ENCODE measurements at regions of chr7 and their contacts with region 1.

Region 1: DNA sequence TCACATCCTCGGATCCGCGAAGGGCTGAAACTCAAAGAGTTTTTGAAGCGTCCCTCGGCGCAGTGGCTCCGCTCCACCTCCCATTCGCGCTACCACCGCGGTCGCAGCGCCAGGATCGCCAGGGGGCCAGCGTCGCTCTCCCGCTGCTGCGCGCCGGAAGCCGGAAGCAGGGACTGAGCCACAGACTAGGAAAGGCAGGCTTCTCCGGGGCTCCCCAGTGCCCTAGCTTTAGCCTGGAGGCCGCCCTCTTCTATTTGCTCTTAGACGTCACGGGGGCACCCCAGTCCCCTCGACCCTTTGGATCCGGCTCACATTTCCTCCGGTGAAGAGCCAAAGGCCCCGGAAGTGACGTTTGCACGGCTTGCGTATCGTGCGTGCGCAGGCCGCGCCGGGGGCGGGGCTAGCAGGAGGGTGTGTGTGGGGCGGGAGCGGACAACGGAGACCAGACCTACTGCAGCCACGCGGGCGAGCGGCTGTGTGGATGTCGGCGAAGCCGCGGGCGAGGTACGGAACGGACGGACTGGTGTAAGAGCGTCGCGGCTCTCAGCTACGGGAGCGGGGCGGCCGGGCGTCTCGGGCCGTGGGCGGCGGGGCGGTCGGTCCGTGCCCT is 25.5 kb downstream of the KCTD7 start:
- DNase-seq: peak; percentile 98
- H3K4me3 Mint-ChIP-seq: peak overlapping the region; percentile 94
- H3K27ac Mint-ChIP-seq: peak overlapping the region; percentile 96
- H3K4me1 Mint-ChIP-seq: peaks cover 23% of the 10 kb centered on the region
- H3K27me3 Mint-ChIP-seq: no peaks in the 10 kb centered on the region

Region 2: GRCh38 chr7:65992526-65992925 is 661.7 kb before region 1 on chr7:
- CTCF ChIA-PET with region 1: no interaction called
- POLR2A ChIA-PET with region 1: no interaction called
- intact Hi-C with region 1: no loop called
- DNase-seq: no peak
- H3K4me3 Mint-ChIP-seq: no peak overlapping the region
- H3K27ac Mint-ChIP-seq: no peak overlapping the region
- H3K4me1 Mint-ChIP-seq: no peaks in the 10 kb centered on the region
- H3K27me3 Mint-ChIP-seq: no peaks in the 10 kb centered on the region

Region 3: GRCh38 chr7:66493235-66494181 is 160.7 kb before region 1 on chr7:
- CTCF ChIA-PET with region 1: no interaction called
- POLR2A ChIA-PET with region 1: no interaction called
- intact Hi-C with region 1: loop called (anchors 1 kb)
- DNase-seq: peak; percentile 97
- H3K4me3 Mint-ChIP-seq: peak overlapping the region; percentile 85
- H3K27ac Mint-ChIP-seq: peak overlapping the region; percentile 91
- H3K4me1 Mint-ChIP-seq: peaks cover 13% of the 10 kb centered on the region
- H3K27me3 Mint-ChIP-seq: no peaks in the 10 kb centered on the region

Region 4: GRCh38 chr7:66591799-66592596 is 62.2 kb before region 1 on chr7:
- CTCF ChIA-PET with region 1: interaction called, 3 read pairs
- POLR2A ChIA-PET with region 1: no interaction called
- intact Hi-C with region 1: loop called (anchors 1 kb)
- DNase-seq: peak; percentile 95
- H3K4me3 Mint-ChIP-seq: peak overlapping the region; percentile 96
- H3K27ac Mint-ChIP-seq: peak overlapping the region; percentile 92
- H3K4me1 Mint-ChIP-seq: peaks cover 44% of the 10 kb centered on the region
- H3K27me3 Mint-ChIP-seq: no peaks in the 10 kb centered on the region

Region 5: GRCh38 chr7:66681491-66682349 is 27.5 kb after region 1 on chr7:
- CTCF ChIA-PET with region 1: no interaction called
- POLR2A ChIA-PET with region 1: interaction called, 9 read pairs
- intact Hi-C with region 1: loop called (anchors 1 kb)
- DNase-seq: peak; percentile 96
- H3K4me3 Mint-ChIP-seq: peak overlapping the region; percentile 90
- H3K27ac Mint-ChIP-seq: peak overlapping the region; percentile 95
- H3K4me1 Mint-ChIP-seq: peaks cover 37% of the 10 kb centered on the region
- H3K27me3 Mint-ChIP-seq: no peaks in the 10 kb centered on the region

Region 6: GRCh38 chr7:66740302-66740979 is 86.2 kb after region 1 on chr7 and contains the start of gene RABGEF1:
- CTCF ChIA-PET with region 1: no interaction called
- POLR2A ChIA-PET with region 1: interaction called, 12 read pairs
- intact Hi-C with region 1: loop called (anchors 1 kb)
- DNase-seq: peak; percentile 98
- H3K4me3 Mint-ChIP-seq: peak within 1 kb of the TSS; percentile 97
- H3K27ac Mint-ChIP-seq: peak within 1 kb of the TSS; percentile 93
- H3K4me1 Mint-ChIP-seq: peaks cover 32% of the 10 kb centered on the region
- H3K27me3 Mint-ChIP-seq: no peaks in the 10 kb centered on the region
- total RNA-seq, gene RABGEF1: 18.8 to 20.7 TPM